ENCODE measurements at regions of chr13 and their contacts with region 1.

Region 1: DNA sequence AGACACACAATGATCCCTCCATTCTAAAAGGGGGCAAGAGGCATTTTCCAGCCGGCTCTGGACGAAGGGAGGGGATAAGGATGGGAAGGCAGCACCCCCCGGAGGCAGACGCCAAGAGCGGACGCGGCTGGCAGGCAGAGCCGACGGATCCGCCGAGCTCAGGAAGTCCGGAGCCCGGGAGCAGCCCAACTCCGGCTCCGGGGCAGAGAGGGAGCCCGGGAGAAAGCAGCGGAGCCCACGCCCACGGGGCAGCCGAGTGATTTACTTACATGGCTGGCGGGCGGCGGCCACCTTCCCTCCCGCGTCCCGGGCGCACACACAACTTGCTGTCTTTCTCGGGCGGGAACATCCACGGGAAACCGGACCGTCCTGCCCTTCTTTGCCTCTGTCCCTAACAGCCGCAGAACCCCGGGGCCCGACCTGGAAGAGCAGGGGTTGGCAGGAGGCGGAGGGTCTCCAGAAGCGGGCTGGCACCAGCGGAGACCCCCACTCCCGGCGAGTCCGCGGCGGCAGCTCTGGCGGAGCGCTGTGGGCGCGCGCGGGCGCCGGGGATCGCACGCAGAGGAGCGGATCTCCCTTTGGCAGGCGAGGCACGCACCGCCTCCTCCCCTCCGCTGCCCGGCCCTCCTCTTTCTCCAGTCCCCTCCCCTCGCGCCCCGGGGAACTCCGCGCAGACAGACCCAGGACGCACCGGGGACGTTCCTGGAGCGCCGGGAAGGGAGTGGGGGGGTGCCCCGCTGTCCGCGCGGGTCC is at the start of gene LHFPL6:
- DNase-seq: peak; percentile 91 to 94 (median 94)
- ATAC-seq: peak; percentile 81 to 97 (median 94)
- H3K4me3 ChIP-seq: peak within 1 kb of the TSS; percentile 79 to 98 (median 90)
- H3K27ac ChIP-seq: peak within 1 kb of the TSS; percentile 85 to 99 (median 93)
- H3K4me1 ChIP-seq: peaks cover 0 to 38% (median 19%) of the 10 kb centered on the region in 12 donors
- H3K27me3 ChIP-seq: peaks cover 0 to 15% (median 0%) of the 10 kb centered on the region in 9 donors
- CTCF ChIP-seq: peak in 11 of 12 donors; percentile 18 to 61 (median 46)
- POLR2A ChIP-seq: peak in 1 of 2 donors; percentile 89
- total RNA-seq, gene LHFPL6: 34.4 to 74.4 (median 55.3) TPM

Region 2: DNA sequence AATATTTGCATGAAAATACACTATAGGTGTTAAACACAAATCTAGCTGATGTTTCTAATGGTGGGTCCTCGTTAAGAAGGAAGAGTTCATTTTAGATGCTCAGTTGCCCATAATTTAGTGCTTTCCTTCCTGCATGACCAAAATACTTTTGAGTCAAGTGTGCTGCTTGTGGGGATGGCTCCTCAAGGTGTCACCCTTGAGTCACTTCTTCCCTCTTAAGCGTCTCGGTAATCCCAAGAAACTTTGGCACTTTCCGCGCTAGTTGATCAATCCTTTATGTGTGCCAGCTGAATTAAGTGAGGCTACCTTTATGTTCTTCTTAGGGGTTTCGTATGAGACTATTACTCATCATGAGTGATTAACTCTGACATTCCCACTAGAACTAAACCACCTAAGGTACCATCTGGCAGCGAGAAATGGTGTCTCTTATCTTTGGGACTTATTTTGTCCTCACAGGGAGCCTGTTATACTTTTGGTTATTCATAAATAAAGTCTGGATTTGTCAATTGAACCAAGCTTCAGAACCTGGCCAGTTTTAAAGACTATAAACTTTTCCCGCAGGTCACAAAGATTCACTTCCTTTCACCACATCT is 457.8 kb before region 1 on chr13:
- intact Hi-C with region 1: loop called in 1 of 10 experiments (anchors 5 kb)
- DNase-seq: peak in 4 of 5 donors; percentile 47 to 65 (median 62)
- ATAC-seq: peak; percentile 57 to 77 (median 74)
- H3K4me3 ChIP-seq: peak overlapping the region in 7 of 12 donors; percentile 13 to 52 (median 21)
- H3K27ac ChIP-seq: peak overlapping the region in 6 of 12 donors; percentile 1 to 47 (median 23)
- H3K4me1 ChIP-seq: peaks cover 0 to 20% (median 0%) of the 10 kb centered on the region in 12 donors
- H3K27me3 ChIP-seq: no peaks in the 10 kb centered on the region
- CTCF ChIP-seq: peak; percentile 62 to 91 (median 84)
- POLR2A ChIP-seq: no peak

Region 3: DNA sequence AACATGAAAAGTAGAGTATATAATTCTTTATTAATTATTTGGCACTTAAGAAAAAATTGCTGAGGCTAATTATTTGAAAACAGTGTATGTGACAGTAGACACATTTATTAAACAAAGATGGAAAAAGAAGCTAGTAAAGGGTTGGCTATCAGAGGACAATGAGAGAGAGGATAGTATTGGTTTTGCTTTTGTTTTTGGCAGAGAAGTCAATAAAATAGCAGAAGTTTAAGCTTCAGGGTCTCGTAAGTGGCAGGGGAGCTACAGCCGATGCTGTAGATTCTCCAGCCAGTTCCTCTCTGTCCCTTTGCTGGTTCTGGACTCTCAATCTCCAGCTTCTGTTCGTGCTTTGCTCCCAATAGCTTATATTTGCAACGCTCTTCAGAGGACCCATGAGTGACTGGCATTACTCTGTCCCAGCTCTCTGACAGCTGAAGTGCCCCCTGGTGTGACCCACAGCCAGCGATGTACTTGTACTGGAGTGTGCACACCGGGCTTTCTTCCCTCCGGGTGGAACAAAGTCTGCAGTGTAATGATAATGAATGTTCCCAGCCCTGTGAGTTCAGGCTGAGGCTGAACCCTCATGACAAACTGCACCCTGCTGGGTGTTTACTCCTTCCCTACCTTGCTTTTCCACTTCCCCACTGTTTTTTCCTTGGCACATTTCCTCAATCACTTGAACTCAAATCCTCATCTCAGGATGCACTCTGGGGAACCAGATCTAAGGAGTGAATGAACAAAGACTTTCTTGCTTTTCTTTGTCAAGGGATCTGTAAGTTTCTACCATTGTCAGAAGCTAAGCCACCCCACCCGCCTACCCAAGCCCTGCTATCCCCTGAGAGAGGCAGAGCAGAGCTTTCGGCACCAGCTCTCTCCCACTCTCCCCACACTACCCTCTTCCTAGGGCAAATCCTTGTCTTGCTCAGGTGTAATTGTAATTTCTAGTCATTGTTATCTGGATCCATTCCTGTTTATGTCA is 254.6 kb before region 1 on chr13:
- intact Hi-C with region 1: loop called in 4 of 10 experiments (anchors 5 to 10 kb)
- DNase-seq: peak; percentile 57 to 86 (median 71)
- ATAC-seq: peak; percentile 93 to 97 (median 94)
- H3K4me3 ChIP-seq: peak overlapping the region in 3 of 12 donors; percentile 9 to 36 (median 25)
- H3K27ac ChIP-seq: peak overlapping the region in 11 of 12 donors; percentile 4 to 83 (median 63)
- H3K4me1 ChIP-seq: peaks cover 0 to 63% (median 41%) of the 10 kb centered on the region in 12 donors
- H3K27me3 ChIP-seq: no peaks in the 10 kb centered on the region
- CTCF ChIP-seq: peak in 2 of 12 donors; percentile 9 to 24
- POLR2A ChIP-seq: no peak

Region 4: GRCh38 chr13:39406688-39407087 is 196.1 kb before region 1 on chr13:
- intact Hi-C with region 1: loop called in 1 of 10 experiments (anchors 5 kb)
- DNase-seq: no peak
- ATAC-seq: no peak
- H3K4me3 ChIP-seq: no peak overlapping the region
- H3K27ac ChIP-seq: no peak overlapping the region
- H3K4me1 ChIP-seq: peaks cover 0 to 84% (median 57%) of the 10 kb centered on the region in 12 donors
- H3K27me3 ChIP-seq: no peaks in the 10 kb centered on the region
- CTCF ChIP-seq: no peak
- POLR2A ChIP-seq: no peak

Region 5: GRCh38 chr13:39451860-39452301 is 150.9 kb before region 1 on chr13:
- intact Hi-C with region 1: loop called in 1 of 10 experiments (anchors 5 kb)
- DNase-seq: peak; percentile 49 to 71 (median 63)
- ATAC-seq: peak; percentile 59 to 83 (median 78)
- H3K4me3 ChIP-seq: no peak overlapping the region
- H3K27ac ChIP-seq: peak overlapping the region; percentile 66 to 84 (median 78)
- H3K4me1 ChIP-seq: peaks cover 17 to 90% (median 76%) of the 10 kb centered on the region in 12 donors
- H3K27me3 ChIP-seq: no peaks in the 10 kb centered on the region
- CTCF ChIP-seq: no peak
- POLR2A ChIP-seq: no peak

Region 6: GRCh38 chr13:39516096-39516495 is 86.7 kb before region 1 on chr13:
- intact Hi-C with region 1: loop called in 4 of 10 experiments (anchors 5 kb)
- DNase-seq: peak in 4 of 5 donors; percentile 34 to 47 (median 42)
- ATAC-seq: peak; percentile 81 to 90 (median 85)
- H3K4me3 ChIP-seq: no peak overlapping the region
- H3K27ac ChIP-seq: peak overlapping the region in 11 of 12 donors; percentile 1 to 82 (median 48)
- H3K4me1 ChIP-seq: peaks cover 10 to 67% (median 29%) of the 10 kb centered on the region in 12 donors
- H3K27me3 ChIP-seq: no peaks in the 10 kb centered on the region
- CTCF ChIP-seq: no peak
- POLR2A ChIP-seq: no peak

Region 7: DNA sequence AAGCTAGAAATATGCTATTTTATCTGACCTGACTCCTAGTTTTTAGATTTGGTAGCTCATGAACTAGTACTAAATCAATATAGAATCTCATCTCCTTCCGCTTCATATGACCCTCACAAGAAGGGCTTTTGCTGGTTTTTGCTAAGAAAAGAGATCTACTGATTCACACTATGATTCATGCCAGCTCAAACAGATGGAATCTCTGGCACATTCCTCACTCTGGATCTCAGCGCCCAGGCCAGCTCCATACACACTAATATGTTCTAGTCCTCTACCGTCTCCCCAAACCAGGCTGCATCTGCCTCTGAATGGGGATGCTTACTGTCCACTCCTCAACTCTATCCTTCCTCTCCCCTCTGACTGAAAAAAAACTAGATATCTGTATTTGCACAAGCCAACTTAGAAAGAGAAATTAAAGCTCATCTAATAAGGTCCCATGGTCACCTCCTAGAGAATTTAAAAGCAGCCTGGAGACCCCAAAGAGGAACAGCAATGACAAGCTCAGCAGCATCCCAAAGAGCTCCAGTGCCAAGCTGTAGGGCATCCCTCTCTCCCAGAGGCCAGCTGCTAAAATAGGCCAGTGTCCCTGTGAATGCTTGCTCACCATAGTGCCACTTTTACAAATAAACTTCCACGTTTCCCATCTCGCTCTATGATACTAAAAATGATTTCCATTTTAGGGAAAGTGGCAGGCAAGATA is 74.7 kb before region 1 on chr13:
- intact Hi-C with region 1: loop called in 3 of 10 experiments (anchors 5 kb)
- DNase-seq: peak in 1 of 5 donors; percentile 50
- ATAC-seq: peak in 3 of 4 donors; percentile 53 to 73 (median 67)
- H3K4me3 ChIP-seq: no peak overlapping the region
- H3K27ac ChIP-seq: peak overlapping the region in 9 of 12 donors; percentile 2 to 36 (median 9)
- H3K4me1 ChIP-seq: peaks cover 3 to 88% (median 65%) of the 10 kb centered on the region in 12 donors
- H3K27me3 ChIP-seq: no peaks in the 10 kb centered on the region
- CTCF ChIP-seq: no peak
- POLR2A ChIP-seq: no peak

Region 8: DNA sequence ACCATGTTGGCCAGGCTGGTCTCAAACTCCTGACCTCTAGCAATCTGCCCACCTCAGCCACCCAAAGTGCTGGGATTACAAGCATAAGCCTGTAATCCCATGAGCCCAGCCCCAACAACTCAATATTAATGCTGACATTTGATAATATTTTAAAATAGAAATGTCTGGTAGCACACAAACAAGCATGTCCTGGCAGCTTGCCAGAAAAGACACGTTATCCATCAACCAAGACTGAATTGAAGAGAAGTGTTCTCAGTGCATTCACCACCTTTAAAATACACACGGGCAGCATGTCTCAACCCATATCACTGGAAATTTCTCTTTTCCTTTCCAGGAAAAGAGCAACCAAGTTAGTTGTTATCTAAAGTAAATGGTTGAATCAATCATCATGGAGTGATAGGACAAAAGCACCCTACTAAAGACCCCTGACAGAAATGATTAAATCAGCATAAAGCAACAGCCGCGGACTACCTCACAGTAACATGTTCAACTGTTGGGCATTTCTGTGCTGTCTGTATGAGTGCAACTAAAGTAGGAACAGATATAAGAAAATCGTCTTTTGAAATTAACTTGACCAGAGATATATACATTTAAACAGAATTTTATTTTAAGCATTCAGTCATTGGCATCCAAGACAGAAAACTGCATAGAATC is 24.8 kb before region 1 on chr13:
- intact Hi-C with region 1: no loop called
- DNase-seq: peak in 4 of 5 donors; percentile 56 to 78 (median 66)
- ATAC-seq: peak; percentile 36 to 56 (median 44)
- H3K4me3 ChIP-seq: no peak overlapping the region
- H3K27ac ChIP-seq: peak overlapping the region in 11 of 12 donors; percentile 20 to 72 (median 46)
- H3K4me1 ChIP-seq: peaks cover 11 to 81% (median 57%) of the 10 kb centered on the region in 12 donors
- H3K27me3 ChIP-seq: no peaks in the 10 kb centered on the region
- CTCF ChIP-seq: no peak
- POLR2A ChIP-seq: no peak

Measured in heart left ventricle (tissue), 16 donors.